H1 (cell line): ENCODE measurements at regions of chrX and their contacts with region 1.

Region 1: GRCh38 chrX:152915527-152916241 is 17.8 kb downstream of the ZNF185 start:
- DNase-seq: peak in 1 of 2 experiments; percentile 65
- H3K4me3 ChIP-seq: no peak overlapping the region
- H3K27ac ChIP-seq: no peak overlapping the region
- H3K4me1 ChIP-seq: peaks cover 0 to 3% (median 2%) of the 10 kb centered on the region in 4 experiments; a peak in 5 of 7 replicates
- H3K27me3 ChIP-seq: no peaks in the 10 kb centered on the region
- CTCF ChIP-seq: peak in 2 of 3 experiments; percentile 72 to 82; a peak in 3 of 4 replicates
- EP300 ChIP-seq: no peak
- POLR2A ChIP-seq: no peak
- RAD21 ChIP-seq: peak; percentile 49 to 69

Region 2: DNA sequence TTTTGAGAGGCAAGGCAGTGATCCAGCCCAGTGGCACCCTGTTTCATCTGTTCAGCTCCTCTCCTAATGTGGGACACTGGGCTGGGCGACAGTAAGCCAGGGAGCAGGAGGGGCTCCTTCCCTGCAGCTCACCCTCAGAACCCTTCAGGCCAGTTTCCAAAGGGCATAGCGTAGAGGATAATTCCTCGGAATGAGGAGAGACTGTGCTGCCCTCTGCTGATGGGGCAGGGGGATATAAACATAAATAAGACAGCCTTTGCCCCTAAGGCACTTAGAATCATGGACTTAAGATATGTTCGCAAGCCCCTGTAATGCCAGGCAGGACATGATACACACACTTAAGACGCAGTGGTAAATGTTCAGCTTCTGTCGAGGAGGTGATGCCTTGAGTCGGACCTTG is 45.7 kb before region 1 on chrX:
- CTCF ChIA-PET with region 1: interaction called, 12 read pairs
- POLR2A ChIA-PET with region 1: interaction called, 3 read pairs
- DNase-seq: no peak
- H3K4me3 ChIP-seq: no peak overlapping the region
- H3K27ac ChIP-seq: no peak overlapping the region
- H3K4me1 ChIP-seq: no peaks in the 10 kb centered on the region
- H3K27me3 ChIP-seq: no peaks in the 10 kb centered on the region
- CTCF ChIP-seq: peak in 2 of 3 experiments; percentile 23 to 47; a peak in 2 of 4 replicates
- EP300 ChIP-seq: no peak
- POLR2A ChIP-seq: no peak
- RAD21 ChIP-seq: peak; percentile 31 to 44; a peak in 3 of 4 replicates

Region 3: DNA sequence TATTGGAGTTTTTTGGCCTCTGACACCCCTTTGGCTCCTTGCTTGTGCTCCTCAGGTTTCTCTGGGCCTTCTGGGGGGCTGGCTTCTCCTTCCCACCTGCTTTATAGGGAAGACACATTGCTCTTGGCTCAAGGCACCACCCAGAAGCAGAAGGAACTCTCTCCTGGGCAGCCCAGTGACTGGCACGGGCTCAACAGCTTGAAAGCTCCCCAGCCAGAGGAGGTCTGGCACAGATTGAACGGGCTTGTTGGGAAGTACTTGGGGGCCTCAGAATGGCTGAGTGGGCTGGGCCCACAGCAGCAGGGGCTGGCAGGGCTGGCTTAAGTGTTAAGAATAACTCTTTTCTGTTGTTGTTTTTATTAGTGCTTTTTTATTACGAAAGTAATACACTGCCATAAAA is 29.0 kb before region 1 on chrX:
- CTCF ChIA-PET with region 1: interaction called, 60 read pairs
- POLR2A ChIA-PET with region 1: no interaction called
- DNase-seq: no peak
- H3K4me3 ChIP-seq: no peak overlapping the region
- H3K27ac ChIP-seq: no peak overlapping the region
- H3K4me1 ChIP-seq: peaks cover 0 to 14% (median 7%) of the 10 kb centered on the region in 4 experiments
- H3K27me3 ChIP-seq: peaks cover 0 to 2% (median 0%) of the 10 kb centered on the region in 4 experiments; a peak in 1 of 7 replicates
- CTCF ChIP-seq: no peak
- EP300 ChIP-seq: no peak
- POLR2A ChIP-seq: no peak
- RAD21 ChIP-seq: no peak

Region 4: DNA sequence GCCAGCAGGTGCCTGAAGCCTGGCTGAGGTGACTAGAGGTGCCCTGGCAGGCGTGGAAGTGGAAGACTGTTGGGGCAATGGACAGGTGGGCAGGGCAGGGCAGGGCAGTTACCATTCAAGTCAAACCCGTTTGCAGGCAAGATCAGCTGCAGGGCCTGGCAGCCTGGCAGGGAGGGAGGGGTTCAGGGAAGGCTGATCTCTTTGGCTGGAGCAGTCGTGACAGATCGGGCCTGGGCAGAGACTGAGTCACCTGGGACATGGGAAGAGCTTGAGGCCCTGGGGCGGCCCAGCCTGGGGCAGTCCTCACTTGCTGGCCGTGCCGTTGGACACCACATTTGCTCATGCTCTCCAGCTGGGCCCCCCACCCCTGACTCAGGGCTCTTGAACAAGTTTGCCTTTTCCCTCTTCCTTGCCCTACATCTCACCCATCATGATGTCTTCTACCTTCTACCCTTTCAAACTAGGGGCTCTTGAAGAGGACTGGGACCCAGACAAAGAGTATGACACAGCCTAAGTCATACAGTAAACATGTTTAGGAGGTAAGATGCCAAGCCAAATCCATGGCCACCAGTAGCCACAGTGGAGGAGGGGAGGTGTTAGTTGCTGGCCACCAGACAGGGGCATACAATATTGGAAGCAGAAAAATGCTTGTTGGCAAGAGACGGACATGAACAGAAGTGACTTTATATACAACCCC is 19.8 kb before region 1 on chrX:
- CTCF ChIA-PET with region 1: interaction called, 94 read pairs
- POLR2A ChIA-PET with region 1: interaction called, 9 read pairs
- DNase-seq: no peak
- H3K4me3 ChIP-seq: no peak overlapping the region
- H3K27ac ChIP-seq: no peak overlapping the region
- H3K4me1 ChIP-seq: peaks cover 2 to 34% (median 22%) of the 10 kb centered on the region in 4 experiments; a peak in 5 of 7 replicates
- H3K27me3 ChIP-seq: peaks cover 0 to 2% (median 0%) of the 10 kb centered on the region in 4 experiments; a peak in 2 of 7 replicates
- CTCF ChIP-seq: no peak
- EP300 ChIP-seq: no peak
- POLR2A ChIP-seq: no peak
- RAD21 ChIP-seq: no peak

Region 5: DNA sequence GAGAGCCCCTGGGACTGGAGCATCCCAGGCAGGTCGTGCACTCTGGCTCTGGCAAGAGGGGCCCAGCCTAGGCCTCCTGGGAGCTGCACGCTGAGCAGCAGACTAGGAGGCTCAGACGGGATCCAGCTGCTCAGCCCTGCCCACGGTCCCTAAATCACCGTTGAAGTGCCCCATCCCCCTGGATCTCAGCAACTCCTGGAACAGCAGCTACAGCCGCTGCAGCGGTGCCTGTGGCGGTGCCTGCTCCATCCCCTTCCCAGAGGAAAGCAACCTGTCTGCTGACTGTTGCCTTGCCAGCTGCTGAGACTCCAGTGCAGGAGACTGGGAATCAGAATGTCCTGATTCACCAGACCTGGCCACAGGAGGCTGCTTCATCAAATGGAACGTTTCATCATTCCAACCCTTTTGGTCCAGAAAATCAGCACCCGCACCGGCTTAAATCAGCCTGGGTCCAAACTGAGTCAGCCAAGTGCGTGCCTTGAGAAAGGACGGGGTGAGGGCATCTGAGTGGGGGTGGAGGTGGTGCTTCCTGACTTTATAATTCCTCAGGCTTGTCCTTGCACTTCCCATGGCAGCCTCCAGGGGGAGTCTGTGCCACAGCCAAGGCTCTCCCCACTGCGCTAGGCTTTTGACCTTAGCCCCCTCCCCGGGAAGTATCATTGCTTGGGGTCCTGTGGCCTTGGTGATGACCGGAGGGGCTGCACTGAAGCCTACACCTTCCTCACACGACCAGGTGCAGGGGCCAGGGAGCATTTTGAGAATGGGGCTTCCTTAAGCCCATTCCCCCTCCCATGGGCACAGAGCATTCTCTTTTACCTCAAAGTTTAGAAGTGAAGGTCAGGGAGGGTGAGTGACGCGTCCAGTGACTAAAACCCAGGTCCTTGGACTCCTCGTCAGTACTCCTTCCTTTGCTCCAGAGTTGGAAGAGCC is 11.3 kb before region 1 on chrX:
- CTCF ChIA-PET with region 1: interaction called, 94 read pairs
- POLR2A ChIA-PET with region 1: interaction called, 9 read pairs
- DNase-seq: peak in 1 of 2 experiments; percentile 77
- H3K4me3 ChIP-seq: peak overlapping the region in 2 of 4 experiments; percentile 23 to 47; a peak in 3 of 8 replicates
- H3K27ac ChIP-seq: no peak overlapping the region
- H3K4me1 ChIP-seq: peaks cover 0 to 25% (median 12%) of the 10 kb centered on the region in 4 experiments; a peak in 6 of 7 replicates
- H3K27me3 ChIP-seq: no peaks in the 10 kb centered on the region
- CTCF ChIP-seq: peak in 2 of 3 experiments; percentile 65 to 71; a peak in 3 of 4 replicates
- EP300 ChIP-seq: no peak
- POLR2A ChIP-seq: no peak
- RAD21 ChIP-seq: peak; percentile 40 to 56; a peak in 3 of 4 replicates

Region 6: GRCh38 chrX:152926279-152926678 is 10.6 kb after region 1 on chrX:
- CTCF ChIA-PET with region 1: interaction called, 25 read pairs
- POLR2A ChIA-PET with region 1: interaction called, 3 read pairs
- DNase-seq: peak in 1 of 2 experiments; percentile 58
- H3K4me3 ChIP-seq: no peak overlapping the region
- H3K27ac ChIP-seq: no peak overlapping the region
- H3K4me1 ChIP-seq: peaks cover 0 to 2% (median under 1%) of the 10 kb centered on the region in 4 experiments; a peak in 4 of 7 replicates
- H3K27me3 ChIP-seq: no peaks in the 10 kb centered on the region
- CTCF ChIP-seq: peak in 2 of 3 experiments; percentile 44 to 60; a peak in 3 of 4 replicates
- EP300 ChIP-seq: no peak
- POLR2A ChIP-seq: no peak
- RAD21 ChIP-seq: peak; percentile 52 to 64